Ascending aorta (tissue), 2 donors: ENCODE measurements at regions of chr3 and their contacts with region 1.

Region 1: DNA sequence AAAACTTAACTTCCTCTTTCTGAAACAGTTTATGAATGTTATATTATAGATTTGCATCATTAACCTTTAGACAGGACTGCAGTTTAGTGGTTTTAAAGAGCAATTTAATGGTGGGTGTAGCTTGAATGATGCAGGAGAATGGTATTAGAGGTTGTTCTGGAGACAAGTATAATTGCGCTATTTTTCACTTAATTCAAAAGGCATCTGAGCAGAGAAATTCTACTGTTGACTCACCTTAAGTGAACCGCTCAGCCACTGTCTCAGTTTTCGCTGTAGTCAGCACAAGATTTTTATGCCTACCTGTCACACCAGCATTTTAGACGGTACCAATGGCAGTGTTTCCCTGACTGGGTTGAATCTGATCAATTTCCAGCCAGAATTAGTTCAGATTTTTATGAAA is 348.8 kb upstream of the DCBLD2 start:
- DNase-seq: no peak
- H3K4me3 ChIP-seq: no peak overlapping the region
- H3K27ac ChIP-seq: peak overlapping the region; percentile 74 to 78
- H3K4me1 ChIP-seq: peaks cover 2 to 54% of the 10 kb centered on the region in 2 donors
- H3K27me3 ChIP-seq: no peaks in the 10 kb centered on the region
- CTCF ChIP-seq: no peak

Region 2: GRCh38 chr3:99236576-99236975 is 13.7 kb before region 1 on chr3:
- intact Hi-C with region 1: no loop called
- DNase-seq: no peak
- H3K4me3 ChIP-seq: no peak overlapping the region
- H3K27ac ChIP-seq: no peak overlapping the region
- H3K4me1 ChIP-seq: peaks cover 8 to 34% of the 10 kb centered on the region in 2 donors
- H3K27me3 ChIP-seq: no peaks in the 10 kb centered on the region
- CTCF ChIP-seq: no peak

Region 3: DNA sequence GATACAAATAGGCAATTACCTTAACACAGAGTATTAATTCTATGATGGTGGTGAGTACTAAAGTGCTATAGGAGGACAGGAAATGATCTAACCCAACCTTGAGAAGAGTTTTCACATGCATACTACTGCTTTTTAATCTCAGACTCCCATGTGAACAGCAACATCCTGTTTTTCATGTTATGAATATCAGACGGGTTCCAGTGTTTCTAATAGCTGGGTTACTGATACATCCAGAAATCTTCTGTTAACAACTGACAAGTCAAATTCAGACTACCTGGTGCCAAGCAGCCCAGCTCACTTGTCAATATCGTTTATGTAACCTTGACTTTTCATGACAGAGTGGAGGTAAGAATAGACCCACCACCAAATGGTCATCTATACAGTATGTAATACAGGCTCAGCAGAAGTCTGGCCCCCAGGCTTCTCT is 167.9 kb after region 1 on chr3:
- intact Hi-C with region 1: loop called (anchors 5 kb)
- DNase-seq: no peak
- H3K4me3 ChIP-seq: no peak overlapping the region
- H3K27ac ChIP-seq: peak overlapping the region; percentile 56 to 79
- H3K4me1 ChIP-seq: peaks cover 0 to 10% of the 10 kb centered on the region in 2 donors
- H3K27me3 ChIP-seq: no peaks in the 10 kb centered on the region
- CTCF ChIP-seq: no peak